GM13977 (cell line): ENCODE measurements at regions of chr11 and their contacts with region 1.

Region 1: DNA sequence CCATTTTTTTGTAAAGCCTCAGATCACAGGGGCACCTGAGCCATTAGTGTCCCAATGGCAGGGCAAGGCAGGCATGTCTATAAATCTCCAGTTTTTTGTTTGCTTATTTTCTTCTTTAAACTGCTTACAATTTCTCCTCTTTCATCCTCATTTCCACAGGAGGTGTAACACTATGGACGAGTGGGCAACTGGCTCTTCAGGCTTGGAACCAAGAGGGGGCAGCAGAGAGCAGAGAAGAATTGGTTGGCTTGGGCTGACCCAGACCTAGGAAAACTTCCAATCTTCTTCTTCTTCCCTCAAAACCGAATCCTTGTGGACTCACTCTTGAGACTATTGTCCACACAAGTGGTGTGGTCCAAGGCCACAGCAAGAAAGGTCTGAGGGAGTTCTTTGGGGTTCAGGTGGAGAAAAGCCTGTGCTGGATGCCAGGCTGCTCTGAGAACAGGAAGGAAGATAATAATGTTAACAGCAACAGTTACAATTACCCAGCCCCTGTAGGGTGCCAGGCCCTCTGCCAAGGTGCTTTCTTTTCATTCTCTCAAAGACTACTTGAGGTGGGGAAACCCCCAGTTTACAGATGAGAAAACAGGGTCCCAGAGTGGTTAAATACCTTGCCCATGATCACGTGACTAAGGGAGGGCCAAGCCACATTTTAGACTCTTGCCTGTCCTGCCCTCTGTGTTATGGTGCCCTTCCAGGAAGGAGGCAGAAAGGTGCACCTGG is 70.7 kb upstream of the E2F8 start:
- DNase-seq: peak; percentile 50
- CTCF ChIP-seq: peak; percentile 75

Region 2: GRCh38 chr11:19071255-19071654 is 240.2 kb before region 1 on chr11:
- in situ Hi-C with region 1: loop called (anchors 25 kb)
- DNase-seq: peak; percentile 76
- CTCF ChIP-seq: peak; percentile 93

Region 3: DNA sequence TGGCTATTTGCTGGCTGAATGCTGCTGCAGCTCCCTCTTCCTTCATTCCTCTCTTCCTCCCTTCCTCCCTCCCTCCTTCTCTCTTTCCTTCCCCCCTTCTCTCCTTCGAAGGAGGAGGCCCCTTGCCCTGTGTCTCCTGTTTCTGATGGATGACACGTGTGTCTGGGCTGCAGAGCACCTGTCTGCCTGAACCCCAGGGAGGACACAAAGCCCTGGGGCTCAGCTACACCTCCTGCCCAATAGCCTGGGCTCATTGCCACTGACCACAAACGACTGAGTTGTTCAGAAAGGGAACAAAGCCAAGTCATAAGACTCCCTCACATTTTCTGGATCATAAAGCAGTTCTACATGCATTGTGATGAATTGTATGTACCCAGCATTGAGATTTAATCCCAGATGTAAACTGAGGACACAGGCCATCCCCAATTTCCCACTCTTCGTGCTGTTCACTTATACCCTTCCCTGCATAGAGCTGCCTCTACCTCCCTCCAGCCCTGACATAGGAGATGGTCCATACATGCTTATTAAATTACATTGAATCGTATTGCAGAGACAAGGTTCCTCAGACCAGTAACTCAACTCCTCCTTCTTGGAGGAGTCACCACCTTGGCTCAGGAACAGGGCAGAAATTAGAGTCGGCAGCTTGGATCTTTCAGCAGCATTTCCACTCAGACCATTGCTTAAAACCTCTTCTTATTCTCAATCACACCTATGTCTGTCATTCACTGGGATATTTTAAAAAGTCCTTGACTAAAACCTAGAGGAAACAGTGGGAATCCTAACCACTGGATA is 110.9 kb before region 1 on chr11:
- in situ Hi-C with region 1: loop called (anchors 25 kb)
- DNase-seq: no peak
- CTCF ChIP-seq: no peak

Region 4: DNA sequence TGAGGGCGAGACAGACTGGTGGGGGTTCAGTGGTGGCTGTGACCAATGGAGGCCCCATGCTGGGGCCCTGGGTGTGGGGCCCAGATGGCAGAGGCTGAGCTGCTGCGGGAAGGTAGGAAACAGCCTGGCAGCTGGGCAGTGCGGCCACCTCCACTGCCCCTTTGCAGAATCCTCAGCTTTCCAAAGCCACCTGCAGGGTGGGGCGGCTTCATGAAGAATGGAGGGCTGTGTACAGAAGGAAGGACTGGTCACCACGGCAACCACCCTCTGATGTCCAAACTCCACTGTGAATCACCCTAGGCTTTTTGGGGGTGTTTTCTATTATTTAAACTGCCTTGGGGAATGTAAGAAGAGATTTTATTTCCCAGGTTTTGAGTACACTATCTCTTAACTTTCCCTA is 234.9 kb after region 1 on chr11:
- in situ Hi-C with region 1: loop called (anchors 10 kb)
- DNase-seq: no peak
- CTCF ChIP-seq: no peak

Region 5: GRCh38 chr11:19742588-19743292 is 431.3 kb after region 1 on chr11:
- in situ Hi-C with region 1: loop called (anchors 25 kb)
- DNase-seq: peak; percentile 44
- CTCF ChIP-seq: peak; percentile 83